ENCODE measurements at regions of chr5 and their contacts with region 1.

Region 1: DNA sequence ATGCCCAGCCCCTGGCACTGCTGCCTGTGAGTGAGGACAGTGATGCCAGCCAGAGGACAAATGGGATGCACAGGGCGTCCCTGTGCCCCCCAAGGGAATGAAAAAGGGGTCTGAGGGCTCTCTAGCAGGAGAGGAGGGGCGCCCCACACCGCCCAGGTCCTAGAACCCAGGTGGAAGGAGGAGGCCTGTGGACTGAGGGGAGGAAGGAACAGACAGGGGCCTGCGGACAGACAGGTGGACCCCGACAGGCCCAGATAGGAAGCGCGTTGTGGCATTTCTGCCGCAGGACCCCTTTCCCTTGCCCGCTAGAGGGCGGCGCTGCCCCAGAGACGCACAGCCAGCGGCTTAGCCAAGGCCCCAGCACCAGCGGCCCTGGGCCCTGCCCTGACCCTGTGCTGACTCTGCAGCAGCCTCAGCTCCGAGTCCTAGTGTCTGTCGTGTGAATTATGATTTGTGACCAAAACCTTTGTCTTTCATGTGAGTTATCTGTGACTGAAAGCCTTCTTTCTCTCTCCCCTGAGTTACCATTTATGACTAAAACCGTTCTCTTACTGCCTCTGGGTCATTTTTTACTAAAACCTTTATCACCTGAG is 30.7 kb downstream of the TRIP13 start:
- DNase-seq: peak; percentile 35 to 54
- ATAC-seq: peak; percentile 46 to 68
- H3K4me3 ChIP-seq: no peak overlapping the region
- H3K27ac ChIP-seq: no peak overlapping the region
- H3K4me1 ChIP-seq: peaks cover 0 to 11% of the 10 kb centered on the region in 2 donors
- H3K27me3 ChIP-seq: peaks cover 28 to 35% (median 28%) of the 10 kb centered on the region in 3 donors
- CTCF ChIP-seq: peak; percentile 38 to 74 (median 64)
- POLR2A ChIP-seq: no peak

Region 2: GRCh38 chr5:873328-873727 is 50.0 kb before region 1 on chr5:
- in situ Hi-C with region 1: no loop called
- intact Hi-C with region 1: no loop called
- DNase-seq: no peak
- ATAC-seq: no peak
- H3K4me3 ChIP-seq: no peak overlapping the region
- H3K27ac ChIP-seq: no peak overlapping the region
- H3K4me1 ChIP-seq: no peaks in the 10 kb centered on the region
- H3K27me3 ChIP-seq: no peaks in the 10 kb centered on the region
- CTCF ChIP-seq: no peak
- POLR2A ChIP-seq: no peak

Region 3: DNA sequence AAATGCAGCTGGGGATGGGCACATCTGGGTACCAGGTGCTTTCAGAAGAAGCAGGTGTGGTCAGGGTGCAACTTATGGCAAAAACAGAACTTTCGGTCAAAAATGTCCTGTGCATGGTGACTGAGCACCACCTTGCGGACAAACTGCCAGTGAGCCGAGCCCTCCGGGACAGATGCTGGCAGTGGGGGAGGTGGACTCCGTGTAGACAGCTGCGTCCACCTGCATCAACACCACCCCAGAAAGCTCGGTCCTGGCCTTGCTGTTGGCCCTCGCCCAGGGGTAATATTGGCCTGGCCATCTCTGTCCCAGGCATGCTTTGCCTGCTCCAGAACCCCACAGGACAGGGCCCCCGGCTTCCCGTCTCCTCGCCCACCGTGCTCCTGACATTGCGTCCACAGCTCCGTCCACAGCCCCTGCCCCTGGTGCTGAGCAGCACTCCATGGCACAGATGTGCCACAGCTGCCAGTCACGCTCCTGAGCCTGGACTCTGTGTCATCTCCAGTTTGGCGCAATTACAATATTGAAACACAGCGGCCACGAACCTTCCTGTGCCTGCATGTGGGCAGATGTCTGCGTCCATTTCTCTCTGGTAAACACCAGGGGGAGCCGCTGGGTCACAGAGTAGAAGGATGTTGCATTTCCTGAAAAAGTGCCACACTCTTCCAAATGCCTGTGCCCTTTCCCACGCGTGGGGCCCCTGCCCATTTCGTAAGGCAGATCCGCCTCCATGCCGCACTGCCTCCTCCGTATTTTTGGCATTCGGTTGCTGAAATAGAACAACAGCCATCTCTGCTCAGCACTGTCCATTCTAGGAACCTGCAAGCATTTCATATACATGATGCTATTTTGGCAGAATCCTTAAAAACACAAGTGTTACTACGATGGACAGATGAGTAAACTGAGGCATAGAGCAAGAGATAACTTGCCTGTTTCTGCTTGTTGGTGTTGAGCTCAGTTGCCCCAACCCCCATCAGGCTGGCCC is 244.6 kb after region 1 on chr5:
- in situ Hi-C with region 1: loop called in 1 of 4 experiments (anchors 25 kb)
- intact Hi-C with region 1: loop called (anchors 10 kb)
- DNase-seq: peak; percentile 27 to 29
- ATAC-seq: peak; percentile 50 to 58
- H3K4me3 ChIP-seq: peak overlapping the region in 1 of 4 donors; percentile 9
- H3K27ac ChIP-seq: no peak overlapping the region
- H3K4me1 ChIP-seq: no peaks in the 10 kb centered on the region
- H3K27me3 ChIP-seq: peaks cover 0 to 11% (median 4%) of the 10 kb centered on the region in 3 donors
- CTCF ChIP-seq: peak in 4 of 5 experiments; percentile 43 to 61 (median 50)
- POLR2A ChIP-seq: no peak

Region 4: GRCh38 chr5:1174122-1174936 is 251.0 kb after region 1 on chr5:
- in situ Hi-C with region 1: loop called in 1 of 4 experiments (anchors 25 kb)
- intact Hi-C with region 1: loop called (anchors 10 kb)
- DNase-seq: peak; percentile 23 to 33
- ATAC-seq: peak; percentile 72 to 73
- H3K4me3 ChIP-seq: no peak overlapping the region
- H3K27ac ChIP-seq: no peak overlapping the region
- H3K4me1 ChIP-seq: no peaks in the 10 kb centered on the region
- H3K27me3 ChIP-seq: peaks cover 0 to 1% (median 0%) of the 10 kb centered on the region in 3 donors
- CTCF ChIP-seq: peak; percentile 39 to 71 (median 65)
- POLR2A ChIP-seq: no peak

Measured in gastrocnemius medialis (tissue), 4 donors.